ENCODE measurements at regions of chr15 and their contacts with region 1.

Region 1: GRCh38 chr15:72783563-72784237 is at the start of gene ADPGK:
- DNase-seq: peak; percentile 28
- H3K4me3 ChIP-seq: peak within 1 kb of the TSS; percentile 70
- H3K27me3 ChIP-seq: no peaks in the 10 kb centered on the region
- CTCF ChIP-seq: no peak
- polyA plus RNA-seq, gene ADPGK: 62.5 and 67.6 TPM in 2 replicates

Region 2: DNA sequence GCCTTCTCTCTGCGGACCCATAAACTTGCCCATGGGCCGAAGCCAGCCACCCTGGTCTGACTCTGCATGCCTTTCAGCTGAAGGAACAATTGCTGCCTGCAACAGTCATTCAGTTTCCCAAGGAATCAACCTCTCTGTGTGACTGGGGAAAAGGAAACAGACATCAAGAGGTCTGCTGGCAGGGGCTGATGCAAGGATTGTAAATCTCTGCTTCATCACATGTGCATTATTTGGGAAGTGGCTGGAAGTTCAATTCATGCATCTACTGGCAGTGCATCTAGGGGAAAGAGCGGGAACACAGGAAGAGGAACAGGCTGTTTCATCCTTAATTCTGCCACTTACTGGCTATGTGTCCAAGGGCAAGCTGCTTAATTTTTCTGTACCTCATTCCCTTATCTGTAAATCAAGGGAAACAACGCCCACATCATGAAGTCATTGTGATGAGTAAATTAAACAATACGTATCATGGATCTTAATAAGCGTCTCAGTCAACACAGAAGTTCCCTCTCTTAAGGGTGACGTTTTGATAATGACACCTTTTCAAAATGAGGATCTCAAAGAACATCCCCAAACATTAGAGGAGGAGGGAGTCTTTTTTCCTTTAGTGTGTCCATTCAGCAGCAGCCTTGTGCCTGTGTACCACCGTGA is 17.3 kb after region 1 on chr15:
- CTCF ChIA-PET with region 1: no interaction called
- POLR2A ChIA-PET with region 1: no interaction called
- DNase-seq: no peak
- H3K4me3 ChIP-seq: no peak overlapping the region
- H3K27me3 ChIP-seq: peaks cover 1% of the 10 kb centered on the region; the same call in 1 of the 2 replicates
- CTCF ChIP-seq: no peak

Region 3: DNA sequence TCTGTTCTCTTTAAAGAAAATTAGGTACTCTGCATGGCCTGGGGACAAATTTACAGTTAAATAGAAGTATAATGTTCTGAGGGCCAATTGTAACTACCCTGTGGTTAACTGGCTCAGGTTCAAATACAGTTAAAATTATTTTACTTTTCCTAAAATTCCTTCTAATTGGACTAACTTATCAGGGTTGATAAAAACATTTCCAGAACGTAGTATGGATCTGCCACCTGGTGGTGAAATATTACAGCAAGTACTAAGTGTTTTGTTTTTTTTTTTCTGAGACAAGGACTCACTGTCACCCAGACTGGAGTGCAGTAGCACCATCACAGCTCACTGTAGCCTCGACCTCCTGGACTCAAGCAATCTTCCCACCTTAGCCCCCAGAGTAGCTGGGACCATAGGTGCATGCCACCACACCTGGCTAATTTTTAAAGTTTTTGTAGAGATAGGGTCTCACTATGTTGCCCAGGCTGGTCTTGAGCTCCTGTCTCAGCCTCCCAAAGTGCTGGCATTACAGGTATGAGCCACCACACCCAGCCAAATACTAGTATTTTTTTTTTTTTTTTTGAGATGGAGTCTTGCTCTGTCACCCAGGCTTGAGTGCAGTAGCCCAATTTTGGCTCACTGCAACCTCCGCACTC is 297.7 kb after region 1 on chr15:
- CTCF ChIA-PET with region 1: interaction called, 21 read pairs
- POLR2A ChIA-PET with region 1: no interaction called
- DNase-seq: no peak
- H3K4me3 ChIP-seq: no peak overlapping the region
- H3K27me3 ChIP-seq: no peaks in the 10 kb centered on the region; the same call in 1 of the 2 replicates
- CTCF ChIP-seq: peak; percentile 61